ENCODE measurements at regions of chr22 and their contacts with region 1.

Region 1: GRCh38 chr22:23893943-23894709 is at the start of gene MIF:
- DNase-seq: peak; percentile 85 to 98 (median 94)
- ATAC-seq: peak; percentile 78
- H3K4me3 ChIP-seq: peak within 1 kb of the TSS; percentile 79
- H3K4me3 Mint-ChIP-seq: peak within 1 kb of the TSS; percentile 95
- H3K27ac ChIP-seq: peak within 1 kb of the TSS; percentile 84 to 91
- H3K27ac Mint-ChIP-seq: peak within 1 kb of the TSS; percentile 97
- H3K4me1 ChIP-seq: peaks cover 30% of the 10 kb centered on the region
- H3K4me1 Mint-ChIP-seq: peaks cover 29% of the 10 kb centered on the region
- H3K27me3 ChIP-seq: no peaks in the 10 kb centered on the region
- H3K27me3 Mint-ChIP-seq: no peaks in the 10 kb centered on the region
- CTCF ChIP-seq: peak; percentile 90
- total RNA-seq, gene MIF: 213 to 226 TPM

Region 2: DNA sequence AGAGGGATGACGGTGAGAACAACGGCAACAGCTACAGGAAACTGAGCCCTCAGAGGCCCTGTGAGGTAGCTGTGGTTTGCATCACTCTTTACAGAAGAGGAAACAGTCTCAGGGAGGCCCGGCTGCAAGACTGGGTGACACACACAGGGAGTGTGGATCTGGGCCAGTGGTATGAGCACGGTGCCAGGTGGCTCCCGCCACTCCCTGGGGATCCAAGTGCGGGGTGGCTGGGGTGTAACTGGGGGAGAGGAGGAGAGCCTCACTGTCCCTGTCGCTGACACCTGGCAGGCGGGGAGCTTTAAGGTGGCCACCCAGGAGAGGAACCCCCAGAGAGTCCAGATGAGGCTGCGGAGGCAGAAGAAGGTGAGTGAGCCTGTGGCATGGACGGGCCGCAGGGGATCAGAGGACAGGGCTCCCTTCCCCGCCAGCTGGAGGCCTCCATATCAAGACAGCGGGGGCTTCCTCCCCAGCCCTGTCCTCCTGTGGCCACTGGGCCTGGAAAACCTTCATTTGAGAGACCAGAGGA is 197.7 kb before region 1 on chr22:
- CTCF ChIA-PET with region 1: no interaction called
- POLR2A ChIA-PET with region 1: interaction called, 10 read pairs
- intact Hi-C with region 1: no loop called
- DNase-seq: peak; percentile 71 to 92 (median 76)
- ATAC-seq: peak; percentile 97
- H3K4me3 ChIP-seq: peak overlapping the region; percentile 64
- H3K4me3 Mint-ChIP-seq: peak overlapping the region; percentile 89
- H3K27ac ChIP-seq: peak overlapping the region; percentile 91 to 97
- H3K27ac Mint-ChIP-seq: peak overlapping the region; percentile 97
- H3K4me1 ChIP-seq: peaks cover 53% of the 10 kb centered on the region
- H3K4me1 Mint-ChIP-seq: peaks cover 46% of the 10 kb centered on the region
- H3K27me3 ChIP-seq: no peaks in the 10 kb centered on the region
- H3K27me3 Mint-ChIP-seq: no peaks in the 10 kb centered on the region
- CTCF ChIP-seq: no peak

Region 3: GRCh38 chr22:23750714-23751440 is 143.2 kb before region 1 on chr22 and contains the start of gene ZNF70:
- CTCF ChIA-PET with region 1: interaction called, 3 read pairs
- POLR2A ChIA-PET with region 1: interaction called, 10 read pairs
- intact Hi-C with region 1: no loop called
- DNase-seq: peak; percentile 67 to 95 (median 84)
- ATAC-seq: peak; percentile 99
- H3K4me3 ChIP-seq: peak within 1 kb of the TSS; percentile 84
- H3K4me3 Mint-ChIP-seq: peak within 1 kb of the TSS; percentile 81
- H3K27ac ChIP-seq: peak within 1 kb of the TSS; percentile 43 to 73
- H3K27ac Mint-ChIP-seq: peak within 1 kb of the TSS; percentile 72
- H3K4me1 ChIP-seq: peaks cover 17% of the 10 kb centered on the region
- H3K4me1 Mint-ChIP-seq: peaks cover 12% of the 10 kb centered on the region
- H3K27me3 ChIP-seq: no peaks in the 10 kb centered on the region
- H3K27me3 Mint-ChIP-seq: no peaks in the 10 kb centered on the region
- CTCF ChIP-seq: no peak
- total RNA-seq, gene ZNF70: 1.3 to 1.9 TPM

Region 4: DNA sequence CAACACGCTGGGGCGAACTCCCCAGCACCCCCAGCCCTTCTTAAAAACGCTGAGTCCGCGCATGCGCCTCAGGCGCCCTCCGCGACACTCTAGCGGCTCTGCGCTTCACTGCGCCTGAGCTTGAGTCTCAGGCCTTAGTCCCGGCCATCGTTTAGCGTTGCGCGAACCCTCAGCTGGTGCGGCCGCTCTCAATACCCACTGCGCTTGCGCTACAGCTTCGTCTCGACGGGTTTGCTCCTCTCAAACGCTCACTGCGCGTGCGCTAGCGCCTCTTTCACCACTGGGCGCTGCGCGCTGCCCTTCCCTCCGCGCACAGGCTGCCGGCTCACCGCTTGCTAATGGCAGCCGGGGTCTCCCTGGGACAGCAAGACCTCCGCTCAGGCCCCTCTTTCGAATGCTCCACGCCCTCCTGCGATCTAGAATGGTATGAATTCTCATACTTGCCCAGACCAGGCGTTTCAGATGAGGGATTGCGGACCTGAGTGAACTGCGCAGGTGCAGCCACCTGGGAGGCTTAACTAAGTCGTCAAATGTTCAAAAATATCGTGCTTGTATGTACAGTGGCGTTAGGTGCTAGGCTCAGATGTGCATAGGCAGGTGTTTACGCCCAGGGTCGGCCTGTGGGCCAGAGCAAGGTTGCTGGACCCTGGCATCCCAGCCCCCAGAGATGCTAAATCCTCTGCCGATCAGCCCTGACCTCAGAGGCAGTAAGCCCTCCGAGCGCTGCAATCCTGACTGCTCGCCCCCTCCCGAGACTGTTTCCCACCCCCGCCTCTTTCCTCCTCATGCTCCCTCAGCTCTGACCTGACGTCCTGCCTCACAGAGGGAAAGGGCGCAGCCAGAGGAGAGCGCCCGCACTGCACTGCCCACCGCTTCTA is 36.3 kb before region 1 on chr22 and contains the start of gene SLC2A11:
- CTCF ChIA-PET with region 1: interaction called, 16 read pairs
- POLR2A ChIA-PET with region 1: interaction called, 44 read pairs
- intact Hi-C with region 1: loop called in 1 of 2 experiments (anchors 5 kb)
- DNase-seq: peak; percentile 85 to 99 (median 92)
- ATAC-seq: peak; percentile 93
- H3K4me3 ChIP-seq: peak within 1 kb of the TSS; percentile 87
- H3K4me3 Mint-ChIP-seq: peak within 1 kb of the TSS; percentile 97
- H3K27ac ChIP-seq: peak within 1 kb of the TSS; percentile 56 to 61
- H3K27ac Mint-ChIP-seq: peak within 1 kb of the TSS; percentile 82
- H3K4me1 ChIP-seq: peaks cover 25% of the 10 kb centered on the region
- H3K4me1 Mint-ChIP-seq: peaks cover 20% of the 10 kb centered on the region
- H3K27me3 ChIP-seq: no peaks in the 10 kb centered on the region
- H3K27me3 Mint-ChIP-seq: no peaks in the 10 kb centered on the region
- CTCF ChIP-seq: no peak
- total RNA-seq, gene SLC2A11: 9.9 to 11.5 TPM

Region 5: GRCh38 chr22:23874871-23875270 is 19.3 kb before region 1 on chr22:
- CTCF ChIA-PET with region 1: no interaction called
- POLR2A ChIA-PET with region 1: no interaction called
- intact Hi-C with region 1: no loop called
- DNase-seq: no peak
- ATAC-seq: no peak
- H3K4me3 ChIP-seq: no peak overlapping the region
- H3K4me3 Mint-ChIP-seq: no peak overlapping the region
- H3K27ac ChIP-seq: no peak overlapping the region
- H3K27ac Mint-ChIP-seq: no peak overlapping the region
- H3K4me1 ChIP-seq: no peaks in the 10 kb centered on the region
- H3K4me1 Mint-ChIP-seq: no peaks in the 10 kb centered on the region
- H3K27me3 ChIP-seq: no peaks in the 10 kb centered on the region
- H3K27me3 Mint-ChIP-seq: no peaks in the 10 kb centered on the region
- CTCF ChIP-seq: no peak

Region 6: GRCh38 chr22:24011735-24012068 is 117.6 kb after region 1 on chr22:
- CTCF ChIA-PET with region 1: interaction called, 7 read pairs
- POLR2A ChIA-PET with region 1: interaction called, 5 read pairs
- intact Hi-C with region 1: loop called in 1 of 2 experiments (anchors 5 kb)
- DNase-seq: no peak
- ATAC-seq: no peak
- H3K4me3 ChIP-seq: peak overlapping the region; percentile 99
- H3K4me3 Mint-ChIP-seq: peak overlapping the region; percentile 99
- H3K27ac ChIP-seq: peak overlapping the region; percentile 73 to 86
- H3K27ac Mint-ChIP-seq: peak overlapping the region; percentile 94
- H3K4me1 ChIP-seq: peaks cover 22% of the 10 kb centered on the region
- H3K4me1 Mint-ChIP-seq: peaks cover 48% of the 10 kb centered on the region
- H3K27me3 ChIP-seq: no peaks in the 10 kb centered on the region
- H3K27me3 Mint-ChIP-seq: no peaks in the 10 kb centered on the region
- CTCF ChIP-seq: no peak

Region 7: DNA sequence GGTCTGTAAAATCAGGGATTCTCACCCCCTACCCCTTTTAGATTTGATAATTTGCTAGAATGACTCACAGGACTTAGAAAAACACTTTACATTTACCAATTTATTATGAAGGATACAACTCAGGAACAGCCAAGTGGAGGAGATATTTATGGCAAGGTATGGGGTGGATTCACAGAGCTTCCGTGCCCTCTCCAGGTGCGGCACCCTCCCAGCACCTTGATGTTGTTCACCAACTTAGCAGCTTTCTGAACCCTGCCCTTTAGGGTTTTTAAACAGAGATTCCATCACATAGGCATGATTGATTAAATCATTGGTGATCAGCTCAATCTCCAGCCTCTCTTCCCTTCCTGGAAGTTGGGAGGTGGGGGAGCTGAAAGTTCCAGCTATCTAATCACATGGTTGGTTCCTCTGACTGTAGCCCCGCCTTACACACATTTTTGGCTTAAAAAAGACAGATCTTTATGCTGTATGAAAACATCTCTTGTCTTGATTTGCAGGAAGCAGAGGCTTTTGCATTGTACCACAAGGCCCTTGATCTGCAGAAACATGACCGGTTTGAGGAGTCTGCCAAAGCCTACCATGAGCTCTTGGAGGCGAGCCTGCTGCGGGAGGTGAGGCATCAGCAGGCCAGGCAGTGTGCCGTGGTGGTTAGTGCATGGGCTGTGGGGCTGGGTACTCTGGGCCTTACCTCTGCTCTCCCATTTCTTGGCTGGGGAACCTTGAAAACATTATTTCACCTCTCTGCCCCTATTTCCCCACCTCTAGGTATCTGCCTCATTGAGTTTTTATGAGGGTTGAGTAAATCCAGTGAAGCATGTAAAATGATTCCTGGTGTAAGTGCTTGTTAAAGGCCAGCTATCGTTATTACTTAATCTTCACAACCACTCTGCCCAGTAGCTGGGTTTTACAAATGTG is 144.0 kb after region 1 on chr22:
- CTCF ChIA-PET with region 1: no interaction called
- POLR2A ChIA-PET with region 1: interaction called, 10 read pairs
- intact Hi-C with region 1: no loop called
- DNase-seq: peak; percentile 22 to 72 (median 52)
- ATAC-seq: peak; percentile 93
- H3K4me3 ChIP-seq: no peak overlapping the region
- H3K4me3 Mint-ChIP-seq: peak overlapping the region; percentile 72
- H3K27ac ChIP-seq: peak overlapping the region; percentile 31
- H3K27ac Mint-ChIP-seq: peak overlapping the region; percentile 93
- H3K4me1 ChIP-seq: peaks cover 39% of the 10 kb centered on the region
- H3K4me1 Mint-ChIP-seq: peaks cover 64% of the 10 kb centered on the region
- H3K27me3 ChIP-seq: no peaks in the 10 kb centered on the region
- H3K27me3 Mint-ChIP-seq: no peaks in the 10 kb centered on the region
- CTCF ChIP-seq: no peak

Measured in CD4-positive, alpha-beta T cell (primary cell).